ENCODE measurements at regions of chr5 and their contacts with region 1.

Region 1: GRCh38 chr5:172583931-172584511 is 57.0 kb upstream of the NEURL1B start:
- DNase-seq: no peak

Region 2: GRCh38 chr5:172504701-172505402 is 79.2 kb before region 1 on chr5:
- intact Hi-C with region 1: loop called (anchors 5 kb)
- DNase-seq: peak; percentile 80

Region 3: DNA sequence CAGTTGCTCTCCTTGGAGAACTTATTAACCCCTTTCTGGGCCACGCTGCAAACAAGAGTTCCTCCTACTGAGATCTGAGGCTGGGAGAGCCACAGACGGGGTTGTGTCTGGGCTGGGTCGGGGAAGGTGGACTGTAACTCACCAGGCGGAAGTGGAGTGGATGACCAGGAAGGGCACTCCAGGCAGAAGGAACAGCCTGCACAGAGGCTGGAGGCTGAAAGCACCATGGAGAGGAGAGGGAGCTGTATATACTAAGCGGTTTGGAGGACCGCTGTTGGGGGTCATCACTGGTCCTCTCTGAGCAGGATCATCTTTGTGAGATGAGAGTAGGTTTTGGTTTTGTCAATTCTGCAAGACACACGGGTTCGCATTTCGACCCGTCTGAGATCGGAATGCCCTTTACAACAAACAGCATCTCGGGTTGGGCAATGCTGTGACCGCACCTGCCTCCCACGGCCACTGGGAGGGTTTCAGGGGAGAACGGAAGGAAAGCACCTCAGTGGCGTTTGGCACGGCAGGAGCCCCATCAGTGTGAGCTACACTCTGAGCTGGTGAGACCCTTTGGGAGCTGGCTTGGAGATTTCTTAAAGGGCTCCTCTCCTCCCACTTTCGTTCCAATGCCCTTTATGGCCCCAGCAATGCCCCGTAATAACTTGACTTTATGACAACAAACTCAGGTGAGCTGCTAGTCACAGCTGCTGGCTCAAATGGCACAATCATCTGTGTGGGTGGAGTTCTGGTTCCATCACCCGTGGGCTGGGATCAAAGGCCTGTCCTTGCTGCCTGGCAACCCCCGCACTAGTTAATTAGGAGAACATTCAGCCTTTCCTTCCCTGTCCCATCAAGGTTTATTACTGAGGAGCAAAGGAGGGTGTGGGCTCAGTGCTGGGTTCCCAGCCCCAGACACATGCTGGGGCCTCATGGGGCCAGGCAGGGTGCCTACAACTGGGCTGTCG is 38.3 kb after region 1 on chr5:
- intact Hi-C with region 1: no loop called
- DNase-seq: peak; percentile 69

Region 4: GRCh38 chr5:172816901-172817564 is 233.0 kb after region 1 on chr5:
- intact Hi-C with region 1: no loop called
- DNase-seq: peak; percentile 49

Measured in cardiac septum (tissue), 1 donor.